WTC11 (cell line): ENCODE measurements at regions of chr6 and their contacts with region 1.

Region 1: GRCh38 chr6:104537180-104537579 is 322.5 kb downstream of the HACE1 start:
- DNase-seq: no peak
- ATAC-seq: no peak
- H3K4me3 Mint-ChIP-seq: no peak overlapping the region
- H3K27ac Mint-ChIP-seq: no peak overlapping the region
- H3K4me1 Mint-ChIP-seq: peaks cover 3% of the 10 kb centered on the region; the same call in 1 of the 2 replicates
- H3K27me3 Mint-ChIP-seq: no peaks in the 10 kb centered on the region
- CTCF ChIP-seq: no peak

Region 2: GRCh38 chr6:104381907-104382306 is 155.3 kb before region 1 on chr6:
- CTCF ChIA-PET with region 1: no interaction called
- POLR2A ChIA-PET with region 1: no interaction called
- DNase-seq: peak; percentile 30
- ATAC-seq: peak; percentile 100
- H3K4me3 Mint-ChIP-seq: no peak overlapping the region
- H3K27ac Mint-ChIP-seq: no peak overlapping the region
- H3K4me1 Mint-ChIP-seq: no peaks in the 10 kb centered on the region
- H3K27me3 Mint-ChIP-seq: no peaks in the 10 kb centered on the region
- CTCF ChIP-seq: no peak

Region 3: DNA sequence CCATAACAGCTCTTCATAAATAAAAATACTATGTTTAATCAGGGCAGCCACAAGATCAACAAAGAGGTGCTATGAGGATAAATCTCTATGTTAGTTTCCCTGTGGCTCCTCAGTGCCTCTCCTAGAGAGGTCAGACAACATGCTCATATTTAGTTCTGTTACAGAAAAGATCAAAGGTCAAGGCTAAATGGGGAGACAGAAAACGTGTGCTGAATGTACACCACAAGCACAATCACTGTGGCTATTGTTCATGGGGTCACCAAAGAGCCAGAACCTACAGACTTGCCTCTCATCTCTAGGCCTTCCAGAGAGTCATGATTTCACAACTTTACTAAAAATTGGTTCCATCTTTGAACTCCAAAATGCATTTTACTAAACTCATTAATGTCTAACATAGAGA is 87.3 kb before region 1 on chr6:
- CTCF ChIA-PET with region 1: no interaction called
- POLR2A ChIA-PET with region 1: no interaction called
- DNase-seq: no peak
- ATAC-seq: no peak
- H3K4me3 Mint-ChIP-seq: no peak overlapping the region
- H3K27ac Mint-ChIP-seq: no peak overlapping the region
- H3K4me1 Mint-ChIP-seq: no peaks in the 10 kb centered on the region
- H3K27me3 Mint-ChIP-seq: no peaks in the 10 kb centered on the region
- CTCF ChIP-seq: no peak

Region 4: GRCh38 chr6:104525677-104526312 is 11.4 kb before region 1 on chr6:
- CTCF ChIA-PET with region 1: interaction called, 17 read pairs
- POLR2A ChIA-PET with region 1: no interaction called
- DNase-seq: peak; percentile 73
- ATAC-seq: peak; percentile 88
- H3K4me3 Mint-ChIP-seq: peak overlapping the region; percentile 56
- H3K27ac Mint-ChIP-seq: no peak overlapping the region
- H3K4me1 Mint-ChIP-seq: peaks cover 20% of the 10 kb centered on the region
- H3K27me3 Mint-ChIP-seq: no peaks in the 10 kb centered on the region; the same call in 1 of the 2 replicates
- CTCF ChIP-seq: peak; percentile 79; the same call in 1 of the 2 replicates